Activated T-helper 1 cell treated with anti-CD3 and anti-CD28 coated beads, Interleukin-12 subunit alpha, Interleukin-12 subunit beta, Interleukin-2, Interleukin-4 antibody, amounts not matched to agents 30 ng/mL and 10 ng/mL and 1 ng/mL, durations not matched to agents 14 hours and 24 hours and 36 hours (primary cell): ENCODE measurements at regions of chr5 and their contacts with region 1.

Region 1: GRCh38 chr5:776792-777711 is 7.5 kb downstream of the ZDHHC11B start:
- DNase-seq: no peak
- H3K4me3 Mint-ChIP-seq: no peak overlapping the region
- H3K27ac Mint-ChIP-seq: no peak overlapping the region
- H3K4me1 Mint-ChIP-seq: no peaks in the 10 kb centered on the region
- H3K27me3 Mint-ChIP-seq: peaks cover 2% of the 10 kb centered on the region

Region 2: DNA sequence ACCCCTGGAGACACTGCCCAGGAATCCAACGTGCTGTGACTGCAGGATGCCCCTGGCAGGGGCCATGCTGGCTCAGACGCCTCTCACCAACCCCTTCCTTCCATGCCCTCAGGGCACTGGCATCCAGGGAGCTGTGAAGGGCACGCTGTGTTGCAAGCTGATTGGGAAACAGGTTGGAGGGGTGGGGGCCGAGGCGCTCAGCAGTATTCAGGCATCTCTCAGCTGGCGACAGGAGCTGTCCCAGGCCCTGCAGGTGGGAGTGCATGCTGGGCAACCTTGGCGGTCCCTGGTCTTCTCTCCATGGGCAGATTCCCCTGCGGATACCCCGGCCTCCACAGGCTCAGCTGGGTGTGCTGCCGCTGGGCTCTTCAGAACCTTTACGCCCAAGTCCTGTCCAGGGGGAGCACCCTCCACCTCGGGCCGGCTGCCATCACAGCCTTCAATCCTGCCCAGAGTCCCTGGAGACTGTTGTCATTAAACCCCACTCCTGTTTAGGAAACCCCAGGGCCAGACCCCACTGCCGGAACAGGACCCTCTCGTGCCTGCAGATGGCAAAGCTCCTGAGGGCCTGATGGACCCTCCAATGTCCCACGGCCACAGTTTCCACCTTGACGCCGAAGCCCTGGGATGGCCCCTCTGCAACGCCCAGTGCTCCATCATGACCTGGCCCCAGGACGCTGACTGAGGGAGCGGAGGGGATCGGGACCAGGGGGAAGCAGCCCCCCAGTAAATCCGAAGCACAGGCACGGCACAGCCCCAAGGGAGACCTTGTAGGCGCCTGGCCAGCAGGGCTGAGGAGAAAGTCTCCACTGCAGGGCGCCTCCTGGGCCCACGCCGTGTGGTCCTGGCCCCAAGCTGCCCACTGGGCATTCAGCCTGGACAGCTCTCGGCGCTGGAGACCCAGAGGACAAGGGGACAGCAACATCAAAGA is 93.2 kb before region 1 on chr5:
- intact Hi-C with region 1: loop called (anchors 5 kb)
- DNase-seq: no peak
- H3K4me3 Mint-ChIP-seq: no peak overlapping the region
- H3K27ac Mint-ChIP-seq: no peak overlapping the region
- H3K4me1 Mint-ChIP-seq: no peaks in the 10 kb centered on the region
- H3K27me3 Mint-ChIP-seq: no peaks in the 10 kb centered on the region